WTC11 (cell line): ENCODE measurements at regions of chr7 and their contacts with region 1.

Region 1: GRCh38 chr7:92695308-92696261 is 105.4 kb upstream of the FAM133B start:
- DNase-seq: peak; percentile 41
- ATAC-seq: peak; percentile 78
- H3K4me3 Mint-ChIP-seq: peak overlapping the region; percentile 67
- H3K27ac Mint-ChIP-seq: peak overlapping the region; percentile 91
- H3K4me1 Mint-ChIP-seq: peaks cover 44% of the 10 kb centered on the region
- H3K27me3 Mint-ChIP-seq: no peaks in the 10 kb centered on the region
- CTCF ChIP-seq: no peak

Region 2: DNA sequence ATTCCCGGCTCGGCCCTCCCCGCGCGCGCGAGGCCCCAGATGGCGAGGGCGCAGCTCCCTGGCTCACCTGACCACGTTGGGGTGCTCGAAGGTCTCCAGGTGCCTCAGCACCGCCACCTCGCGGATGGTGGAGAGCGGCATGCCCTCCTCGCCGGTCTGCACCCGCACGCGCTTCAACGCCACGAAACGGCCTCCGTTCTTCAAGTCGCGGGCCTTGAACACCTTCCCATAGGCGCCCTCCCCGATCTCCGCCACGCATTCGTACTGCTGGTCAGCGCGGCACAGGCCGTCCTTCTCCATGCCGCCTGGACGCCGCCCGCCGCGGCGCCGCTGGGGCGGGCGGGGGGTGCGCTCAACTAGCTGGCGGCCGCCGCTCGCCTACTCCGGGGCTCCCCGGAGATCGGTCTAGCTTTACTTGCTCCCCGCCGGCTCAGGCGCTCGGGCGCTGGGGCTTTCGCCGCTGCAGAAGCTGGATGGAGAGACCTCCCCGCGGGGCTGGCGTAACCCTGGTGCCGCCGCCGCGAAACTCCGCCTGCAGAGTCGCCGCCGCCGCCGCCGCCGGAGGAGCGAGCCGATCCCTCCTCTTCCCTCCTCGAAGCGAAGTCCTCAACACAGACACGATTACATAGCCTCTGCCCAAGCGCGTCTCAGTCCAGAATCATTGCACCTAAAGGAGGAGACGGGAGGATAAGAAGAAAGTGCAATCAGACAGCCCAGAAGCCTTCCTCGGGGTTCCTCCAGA is 137.6 kb after region 1 on chr7:
- CTCF ChIA-PET with region 1: interaction called, 28 read pairs
- POLR2A ChIA-PET with region 1: interaction called, 3 read pairs
- DNase-seq: peak; percentile 92
- ATAC-seq: peak; percentile 57
- H3K4me3 Mint-ChIP-seq: peak overlapping the region; percentile 94
- H3K27ac Mint-ChIP-seq: peak overlapping the region; percentile 59
- H3K4me1 Mint-ChIP-seq: peaks cover 49% of the 10 kb centered on the region
- H3K27me3 Mint-ChIP-seq: peaks cover 20% of the 10 kb centered on the region
- CTCF ChIP-seq: peak; percentile 56